ENCODE measurements at regions of chr4 and their contacts with region 1.

Region 1: DNA sequence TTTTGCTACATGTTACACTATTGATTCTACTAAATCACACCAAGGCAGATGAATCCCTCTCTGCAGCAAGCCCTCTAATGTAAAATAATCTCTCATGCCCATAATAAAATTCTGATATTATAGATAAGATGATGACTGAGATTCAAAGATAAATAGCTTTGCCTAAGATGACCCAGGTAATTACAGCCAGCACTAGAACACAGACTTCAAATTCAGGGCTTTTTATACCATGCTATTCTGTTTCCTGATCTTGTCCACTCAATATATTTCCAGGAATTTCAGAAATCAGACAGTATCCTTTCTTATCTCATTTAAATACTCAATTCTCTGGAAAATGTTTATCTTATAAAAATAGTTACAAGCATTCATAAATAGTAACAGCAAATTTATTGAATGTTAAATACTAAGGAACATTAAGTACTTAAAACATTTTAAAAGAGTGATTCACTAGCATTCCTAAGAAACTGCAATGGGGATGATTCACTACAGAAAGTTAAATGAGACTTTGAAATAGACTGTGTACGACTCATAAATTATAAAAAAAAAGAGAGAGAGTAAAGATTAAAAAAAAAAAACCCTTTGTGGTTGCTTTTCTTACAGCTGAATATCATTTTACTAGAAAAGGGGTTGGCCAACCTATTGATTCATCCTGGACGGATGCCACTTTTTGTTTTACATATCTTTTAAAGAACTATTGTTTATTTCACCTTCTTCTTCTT is 45.8 kb upstream of the IL21 start:
- DNase-seq: no peak
- H3K4me3 Mint-ChIP-seq: peak overlapping the region; percentile 59
- H3K27ac Mint-ChIP-seq: peak overlapping the region; percentile 94
- H3K4me1 Mint-ChIP-seq: peaks cover 69% of the 10 kb centered on the region
- H3K27me3 Mint-ChIP-seq: no peaks in the 10 kb centered on the region

Region 2: DNA sequence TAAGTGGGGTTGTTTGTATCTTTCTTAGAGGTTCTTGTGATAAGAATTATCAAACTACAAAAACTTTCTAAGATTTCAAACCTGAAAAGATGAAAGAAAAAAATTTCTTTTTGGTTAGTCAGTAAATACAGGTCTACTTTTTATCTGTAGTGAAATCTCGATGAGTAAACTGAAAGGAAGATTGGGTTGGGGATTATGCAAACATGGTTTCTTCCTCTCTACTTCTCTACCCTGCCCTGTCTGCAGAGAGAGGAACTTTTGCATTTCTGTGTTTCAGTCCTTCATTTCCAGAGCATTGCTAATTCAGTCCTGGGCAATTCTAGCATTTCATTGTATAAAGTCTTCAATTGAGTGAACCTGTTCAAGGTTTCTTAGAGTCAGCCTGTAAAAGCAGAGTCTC is 158.6 kb before region 1 on chr4:
- intact Hi-C with region 1: loop called (anchors 1 kb)
- DNase-seq: peak; percentile 70
- H3K4me3 Mint-ChIP-seq: peak overlapping the region; percentile 65
- H3K27ac Mint-ChIP-seq: peak overlapping the region; percentile 82
- H3K4me1 Mint-ChIP-seq: peaks cover 55% of the 10 kb centered on the region
- H3K27me3 Mint-ChIP-seq: no peaks in the 10 kb centered on the region

Region 3: GRCh38 chr4:122617597-122618593 is 48.8 kb before region 1 on chr4:
- intact Hi-C with region 1: loop called (anchors 1 kb)
- DNase-seq: peak; percentile 58
- H3K4me3 Mint-ChIP-seq: peak overlapping the region; percentile 89
- H3K27ac Mint-ChIP-seq: peak overlapping the region; percentile 91
- H3K4me1 Mint-ChIP-seq: peaks cover 50% of the 10 kb centered on the region
- H3K27me3 Mint-ChIP-seq: no peaks in the 10 kb centered on the region

Region 4: DNA sequence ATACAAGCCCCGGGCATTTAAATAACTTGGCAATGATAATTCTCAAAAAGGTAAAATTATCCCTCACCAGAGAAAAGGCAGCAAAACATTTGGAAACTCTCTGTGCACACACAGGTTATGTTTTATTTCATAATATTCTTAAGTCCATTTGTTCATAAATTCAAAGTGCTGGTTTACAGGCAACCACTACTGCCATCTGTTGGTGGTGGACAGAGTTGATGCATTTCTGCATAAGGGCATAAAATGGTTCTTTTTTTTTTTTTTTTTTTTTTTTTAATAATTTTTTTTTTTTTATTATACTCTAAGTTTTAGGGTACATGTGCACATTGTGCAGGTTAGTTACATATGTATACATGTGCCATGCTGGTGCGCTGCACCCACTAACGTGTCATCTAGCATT is 14.3 kb before region 1 on chr4:
- intact Hi-C with region 1: no loop called
- DNase-seq: peak; percentile 83
- H3K4me3 Mint-ChIP-seq: no peak overlapping the region
- H3K27ac Mint-ChIP-seq: no peak overlapping the region
- H3K4me1 Mint-ChIP-seq: peaks cover 13% of the 10 kb centered on the region
- H3K27me3 Mint-ChIP-seq: no peaks in the 10 kb centered on the region

Region 5: DNA sequence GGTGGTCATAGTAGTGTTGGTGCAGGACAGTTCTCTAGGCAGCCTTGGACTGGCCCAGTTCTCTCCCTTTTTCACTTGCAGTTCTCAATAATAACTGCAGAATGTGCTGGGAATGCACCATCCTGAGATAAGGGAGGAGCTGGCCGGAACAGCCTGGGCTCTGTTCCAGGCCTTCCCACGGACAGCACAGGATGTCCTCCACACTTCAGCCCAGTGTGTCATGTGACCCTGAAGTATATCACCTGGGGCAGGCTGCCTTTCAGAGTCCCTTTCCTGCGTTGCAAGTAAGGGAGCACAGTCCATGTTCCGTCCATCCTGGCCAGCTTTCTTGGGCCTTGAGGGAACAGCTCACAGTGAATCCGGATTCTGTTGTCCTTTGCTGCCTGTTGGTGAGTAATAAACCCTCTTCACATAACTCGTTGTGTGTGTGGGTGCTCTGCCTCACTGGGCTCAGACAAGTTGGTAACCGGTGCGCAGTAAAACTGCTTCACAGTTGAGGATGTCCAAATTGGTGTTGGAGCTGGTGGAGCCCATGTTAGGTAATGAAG is 33.6 kb after region 1 on chr4:
- intact Hi-C with region 1: loop called (anchors 1 kb)
- DNase-seq: no peak
- H3K4me3 Mint-ChIP-seq: peak overlapping the region; percentile 76
- H3K27ac Mint-ChIP-seq: peak overlapping the region; percentile 94
- H3K4me1 Mint-ChIP-seq: peaks cover 55% of the 10 kb centered on the region
- H3K27me3 Mint-ChIP-seq: no peaks in the 10 kb centered on the region

Region 6: DNA sequence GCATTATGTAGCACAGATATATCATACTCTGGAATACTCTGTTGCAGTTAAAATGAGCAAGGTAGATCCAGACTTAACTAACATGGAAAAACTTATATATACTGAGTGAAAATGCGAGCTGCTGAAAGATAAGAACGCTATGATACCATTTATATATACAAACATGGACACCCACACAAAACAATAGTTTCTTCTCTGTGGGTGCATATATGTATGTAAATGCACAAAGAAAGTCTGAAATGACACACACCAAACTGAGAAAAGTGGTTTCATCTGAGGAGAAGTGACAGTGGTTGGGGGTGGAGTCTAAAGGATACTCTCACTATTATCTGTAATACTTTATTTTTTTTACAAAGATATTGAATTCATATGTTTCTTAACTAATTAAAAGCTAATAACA is 147.7 kb after region 1 on chr4:
- intact Hi-C with region 1: loop called (anchors 2 kb)
- DNase-seq: no peak
- H3K4me3 Mint-ChIP-seq: no peak overlapping the region
- H3K27ac Mint-ChIP-seq: peak overlapping the region; percentile 70
- H3K4me1 Mint-ChIP-seq: peaks cover 10% of the 10 kb centered on the region
- H3K27me3 Mint-ChIP-seq: peaks cover 9% of the 10 kb centered on the region

Region 7: GRCh38 chr4:123418351-123418931 is 751.8 kb after region 1 on chr4:
- intact Hi-C with region 1: loop called (anchors 10 kb)
- DNase-seq: peak; percentile 71
- H3K4me3 Mint-ChIP-seq: peak overlapping the region; percentile 57
- H3K27ac Mint-ChIP-seq: peak overlapping the region; percentile 99
- H3K4me1 Mint-ChIP-seq: peaks cover 69% of the 10 kb centered on the region
- H3K27me3 Mint-ChIP-seq: no peaks in the 10 kb centered on the region

Measured in activated CD4-positive, alpha-beta T cell treated with anti-CD3 and anti-CD28 coated beads, Interleukin-2, amount 10 ng/mL, durations not matched to agents 24 days and 14 days (primary cell).